ENCODE measurements at regions of chr12 and their contacts with region 1.

Region 1: GRCh38 chr12:90091021-90091651 is 382.5 kb upstream of the ATP2B1 start:
- H3K4me3 ChIP-seq: no peak overlapping the region
- H3K27ac ChIP-seq: peak overlapping the region; percentile 72
- H3K4me1 ChIP-seq: peaks cover 13% of the 10 kb centered on the region
- CTCF ChIP-seq: no peak

Region 2: DNA sequence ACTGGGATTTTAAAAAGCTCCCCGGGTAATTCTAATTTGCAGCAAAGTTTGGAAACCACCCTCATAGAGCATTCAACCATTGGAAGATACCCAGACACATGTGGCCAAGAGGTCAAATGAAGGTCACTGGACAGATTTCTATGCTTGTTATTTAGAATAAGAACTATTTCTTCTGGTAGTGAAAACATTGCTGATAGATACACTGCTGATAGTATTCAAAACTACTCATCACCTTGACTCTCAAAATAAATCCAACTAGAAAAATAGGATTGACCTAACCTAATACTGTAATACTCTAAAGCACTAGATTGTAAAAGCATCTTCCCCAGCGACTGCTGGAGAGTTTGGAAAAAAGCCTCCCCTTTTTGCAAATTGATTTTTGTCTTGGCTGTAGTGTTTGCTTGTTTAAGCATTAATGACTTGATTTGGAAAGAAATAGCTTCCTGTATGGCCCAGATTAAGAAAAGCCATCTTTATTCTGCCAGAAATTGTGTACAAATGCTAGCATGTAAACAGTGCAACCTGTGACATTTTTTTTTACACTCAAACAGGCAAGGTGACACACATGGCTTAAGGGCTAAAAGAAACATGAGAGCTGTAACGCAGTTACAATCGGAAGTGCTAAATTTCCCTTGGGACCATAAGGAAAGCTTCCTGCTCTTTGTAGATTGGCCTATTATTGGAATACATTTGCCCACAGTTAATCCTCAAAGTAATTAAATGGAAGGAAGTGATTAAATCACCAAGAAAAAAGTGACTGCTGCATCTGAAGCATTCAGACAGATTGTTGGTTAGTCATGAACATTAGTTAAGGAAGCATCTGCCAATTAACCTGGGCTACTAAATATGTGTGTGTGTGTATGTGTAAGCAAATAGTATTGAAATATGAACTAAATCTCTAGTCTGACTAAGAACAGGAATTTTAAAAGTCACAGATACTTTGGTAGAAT is 26.0 kb before region 1 on chr12:
- CTCF ChIA-PET with region 1: no interaction called
- POLR2A ChIA-PET with region 1: no interaction called
- H3K4me3 ChIP-seq: no peak overlapping the region
- H3K27ac ChIP-seq: no peak overlapping the region; the same call in 1 of the 2 replicates
- H3K4me1 ChIP-seq: peaks cover 4% of the 10 kb centered on the region; the same call in 1 of the 2 replicates
- CTCF ChIP-seq: no peak

Region 3: DNA sequence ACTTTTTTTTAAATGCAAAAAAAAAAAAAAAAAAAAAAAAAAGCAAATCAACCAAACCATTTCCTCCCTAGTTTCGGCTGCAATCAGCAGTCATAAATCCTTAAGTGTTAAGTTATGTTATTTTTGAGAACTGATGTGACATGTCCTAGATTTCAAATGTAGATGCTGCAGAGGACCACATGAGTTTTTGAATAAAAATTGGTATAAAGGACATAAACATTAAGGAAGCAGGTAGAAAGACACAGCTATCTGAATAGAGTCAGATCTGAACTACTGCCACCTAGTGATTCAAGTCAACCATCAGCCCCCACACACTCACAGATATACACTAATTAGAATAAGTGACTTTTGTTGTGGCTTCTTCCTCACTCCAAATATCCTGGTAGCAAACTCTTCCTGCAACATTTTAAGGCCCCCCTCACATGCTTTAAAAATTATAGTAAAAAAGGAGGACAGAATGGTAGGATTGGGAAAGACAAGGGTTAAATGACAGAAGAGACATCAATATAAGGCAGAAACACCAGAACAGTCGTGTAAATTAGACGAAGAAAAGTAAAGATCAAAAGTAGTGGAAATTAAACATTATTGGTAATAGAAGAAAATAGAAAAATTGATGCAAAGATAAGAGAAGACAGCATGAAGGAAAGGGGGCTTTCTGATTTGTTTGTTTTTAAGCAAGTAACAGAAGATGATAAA is 12.0 kb after region 1 on chr12:
- CTCF ChIA-PET with region 1: interaction called, 11 read pairs
- POLR2A ChIA-PET with region 1: no interaction called
- H3K4me3 ChIP-seq: no peak overlapping the region
- H3K27ac ChIP-seq: no peak overlapping the region
- H3K4me1 ChIP-seq: peaks cover 20% of the 10 kb centered on the region
- CTCF ChIP-seq: peak; percentile 40; the same call in 1 of the 2 replicates

Region 4: DNA sequence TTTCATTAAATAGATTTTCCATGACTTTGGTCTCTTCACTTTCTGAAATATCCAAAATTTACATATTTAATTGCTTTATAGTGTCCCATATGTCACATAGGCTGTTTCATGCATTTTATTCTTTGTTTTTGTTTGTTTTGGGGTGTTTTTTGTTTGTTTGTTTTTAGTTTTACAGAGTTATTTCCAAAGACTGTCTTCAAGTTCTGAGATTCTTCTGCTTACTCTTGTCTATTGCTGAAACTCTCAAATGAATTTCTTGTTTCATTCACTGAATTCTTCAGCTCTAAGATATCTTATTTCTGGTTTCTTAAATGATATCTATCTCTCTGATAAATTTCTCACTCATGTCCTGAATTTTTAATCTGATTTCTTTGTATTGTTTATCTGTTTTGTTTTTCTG is 29.5 kb after region 1 on chr12:
- CTCF ChIA-PET with region 1: no interaction called
- POLR2A ChIA-PET with region 1: no interaction called
- H3K4me3 ChIP-seq: no peak overlapping the region
- H3K27ac ChIP-seq: no peak overlapping the region
- H3K4me1 ChIP-seq: no peaks in the 10 kb centered on the region
- CTCF ChIP-seq: no peak

Region 5: DNA sequence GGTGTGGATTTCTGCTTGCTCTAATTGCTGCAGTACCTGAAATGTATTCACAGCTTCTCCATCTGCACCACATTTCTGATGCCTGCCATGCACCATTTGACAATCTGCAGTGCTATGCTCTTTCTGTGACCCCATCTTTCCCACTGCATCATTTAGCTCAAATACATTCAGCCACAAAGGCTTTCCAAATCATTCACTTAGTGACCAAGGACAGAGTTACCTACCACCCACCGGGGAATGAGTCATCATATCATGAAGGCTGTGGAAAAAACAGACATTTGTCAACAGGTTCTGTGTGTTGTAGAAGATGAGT is 83.0 kb after region 1 on chr12:
- CTCF ChIA-PET with region 1: no interaction called
- POLR2A ChIA-PET with region 1: no interaction called
- H3K4me3 ChIP-seq: no peak overlapping the region
- H3K27ac ChIP-seq: no peak overlapping the region
- H3K4me1 ChIP-seq: peaks cover 4% of the 10 kb centered on the region; the same call in 1 of the 2 replicates
- CTCF ChIP-seq: no peak